ENCODE measurements at regions of chr18 and their contacts with region 1.

Region 1: DNA sequence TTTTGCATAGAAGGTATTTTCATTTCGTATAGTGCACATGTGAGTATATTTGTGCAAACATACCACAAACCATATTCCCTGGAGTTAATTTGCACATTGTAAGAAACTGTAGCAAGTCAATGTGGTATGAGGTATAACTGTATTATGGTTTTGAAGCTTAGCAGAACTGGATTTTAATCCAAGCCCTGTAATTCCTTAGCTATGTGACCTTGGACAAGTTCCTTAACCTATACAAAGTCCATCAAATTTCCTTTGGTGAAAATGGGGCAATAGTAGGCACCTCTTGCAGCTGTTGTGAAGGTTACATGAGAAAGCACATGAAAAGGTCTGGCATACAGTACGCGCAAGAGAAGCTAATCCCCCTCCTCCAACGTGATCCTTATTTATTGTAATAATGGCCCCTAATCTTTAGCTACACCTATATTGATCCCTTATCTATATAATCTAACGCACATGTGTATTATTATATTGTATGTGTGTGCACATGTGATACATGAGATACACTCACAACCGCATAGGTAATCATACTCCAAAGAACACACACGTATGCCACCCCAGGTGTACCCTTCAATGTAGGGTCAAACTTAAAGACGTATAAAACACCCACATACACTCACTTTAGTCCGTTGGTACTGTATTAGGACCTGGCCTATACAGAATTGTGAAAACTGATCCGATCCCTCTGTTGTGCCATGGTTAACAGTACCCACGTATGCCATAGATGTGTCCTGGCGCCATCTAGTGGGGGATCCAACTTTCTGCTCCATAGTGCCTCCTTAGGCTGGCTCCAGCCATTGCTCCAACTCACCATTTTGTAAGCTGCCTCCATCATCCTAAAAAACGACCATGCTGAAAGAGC is 402.9 kb upstream of the SLC14A2 start:
- DNase-seq: peak; percentile 58
- ATAC-seq: peak; percentile 100
- H3K4me3 ChIP-seq: no peak overlapping the region
- H3K27ac ChIP-seq: no peak overlapping the region
- H3K4me1 ChIP-seq: no peaks in the 10 kb centered on the region
- H3K27me3 ChIP-seq: no peaks in the 10 kb centered on the region
- CTCF ChIP-seq: peak; percentile 99 to 100 (median 99); a peak in 5 of 6 replicates
- EP300 ChIP-seq: no peak
- POLR2A ChIP-seq: no peak
- RAD21 ChIP-seq: peak; percentile 96

Region 2: GRCh38 chr18:44725300-44726096 is 486.9 kb before region 1 on chr18:
- CTCF ChIA-PET with region 1: interaction called, 10 read pairs
- POLR2A ChIA-PET with region 1: no interaction called
- RAD21 ChIA-PET with region 1: interaction called, 3 read pairs
- SMC1A ChIA-PET with region 1: interaction called, 12 read pairs
- in situ Hi-C with region 1: no loop called
- intact Hi-C with region 1: no loop called
- DNase-seq: peak; percentile 71
- ATAC-seq: peak; percentile 73
- H3K4me3 ChIP-seq: peak overlapping the region; percentile 33; the same call in 1 of the 2 replicates
- H3K27ac ChIP-seq: peak overlapping the region; percentile 35
- H3K4me1 ChIP-seq: peaks cover 73% of the 10 kb centered on the region
- H3K27me3 ChIP-seq: no peaks in the 10 kb centered on the region
- CTCF ChIP-seq: no peak
- EP300 ChIP-seq: peak; percentile 50 to 89; a peak in 3 of 4 replicates
- POLR2A ChIP-seq: no peak
- RAD21 ChIP-seq: peak; percentile 30; the same call in 1 of the 2 replicates

Region 3: GRCh38 chr18:44901283-44901682 is 311.1 kb before region 1 on chr18:
- CTCF ChIA-PET with region 1: interaction called, 49 read pairs
- POLR2A ChIA-PET with region 1: no interaction called
- RAD21 ChIA-PET with region 1: interaction called, 31 read pairs
- SMC1A ChIA-PET with region 1: interaction called, 10 read pairs
- in situ Hi-C with region 1: loop called (anchors 5 kb)
- intact Hi-C with region 1: loop called (anchors 1 kb)
- DNase-seq: no peak
- ATAC-seq: peak; percentile 52; the same call in 2 of the 3 replicates
- H3K4me3 ChIP-seq: no peak overlapping the region
- H3K27ac ChIP-seq: no peak overlapping the region
- H3K4me1 ChIP-seq: no peaks in the 10 kb centered on the region
- H3K27me3 ChIP-seq: no peaks in the 10 kb centered on the region
- CTCF ChIP-seq: 0 out of 6 replicates have a peak, but pooled peaks of 1 of the 3 experiments have one; percentile 26
- EP300 ChIP-seq: no peak
- POLR2A ChIP-seq: no peak
- RAD21 ChIP-seq: peak; percentile 32; the same call in 1 of the 2 replicates

Region 4: DNA sequence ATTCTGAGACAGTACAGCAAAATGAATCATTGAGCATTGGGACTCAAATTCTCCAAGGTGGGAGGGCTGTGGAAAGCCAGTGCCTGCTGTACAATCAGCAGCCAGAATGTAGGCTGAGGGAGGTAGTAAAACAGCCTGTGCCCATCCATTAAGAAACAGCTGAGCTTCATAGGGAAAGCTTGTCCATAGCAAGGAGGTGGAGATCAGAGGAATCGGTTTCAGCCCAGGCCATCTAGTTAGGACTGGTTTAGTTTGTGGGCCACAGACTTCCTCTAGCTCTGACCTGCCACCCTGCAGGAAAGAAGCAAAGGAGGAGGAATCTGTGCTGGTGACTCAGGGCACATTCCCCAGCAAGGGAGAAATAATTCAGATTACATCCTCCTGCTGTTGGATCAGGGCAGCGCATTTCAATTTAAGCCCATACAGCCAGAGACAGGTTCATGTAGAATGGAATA is 198.3 kb before region 1 on chr18:
- CTCF ChIA-PET with region 1: no interaction called
- POLR2A ChIA-PET with region 1: no interaction called
- RAD21 ChIA-PET with region 1: no interaction called
- SMC1A ChIA-PET with region 1: no interaction called
- in situ Hi-C with region 1: loop called (anchors 25 kb)
- intact Hi-C with region 1: no loop called
- DNase-seq: no peak
- ATAC-seq: no peak
- H3K4me3 ChIP-seq: no peak overlapping the region
- H3K27ac ChIP-seq: no peak overlapping the region
- H3K4me1 ChIP-seq: peaks cover 6% of the 10 kb centered on the region
- H3K27me3 ChIP-seq: no peaks in the 10 kb centered on the region
- CTCF ChIP-seq: no peak
- EP300 ChIP-seq: no peak
- POLR2A ChIP-seq: no peak
- RAD21 ChIP-seq: no peak

Region 5: GRCh38 chr18:45106331-45106774 is 106.1 kb before region 1 on chr18:
- CTCF ChIA-PET with region 1: interaction called, 25 read pairs
- POLR2A ChIA-PET with region 1: no interaction called
- RAD21 ChIA-PET with region 1: interaction called, 11 read pairs
- SMC1A ChIA-PET with region 1: interaction called, 23 read pairs
- in situ Hi-C with region 1: no loop called
- intact Hi-C with region 1: loop called (anchors 5 kb)
- DNase-seq: peak; percentile 87
- ATAC-seq: peak; percentile 83
- H3K4me3 ChIP-seq: no peak overlapping the region
- H3K27ac ChIP-seq: peak overlapping the region; percentile 92
- H3K4me1 ChIP-seq: peaks cover 47% of the 10 kb centered on the region
- H3K27me3 ChIP-seq: no peaks in the 10 kb centered on the region
- CTCF ChIP-seq: no peak
- EP300 ChIP-seq: peak; percentile 97 to 99
- POLR2A ChIP-seq: no peak
- RAD21 ChIP-seq: no peak

Region 6: GRCh38 chr18:45255197-45255890 is 42.9 kb after region 1 on chr18:
- CTCF ChIA-PET with region 1: no interaction called
- POLR2A ChIA-PET with region 1: no interaction called
- RAD21 ChIA-PET with region 1: no interaction called
- SMC1A ChIA-PET with region 1: no interaction called
- in situ Hi-C with region 1: no loop called
- intact Hi-C with region 1: no loop called
- DNase-seq: no peak
- ATAC-seq: no peak
- H3K4me3 ChIP-seq: no peak overlapping the region
- H3K27ac ChIP-seq: no peak overlapping the region
- H3K4me1 ChIP-seq: no peaks in the 10 kb centered on the region
- H3K27me3 ChIP-seq: no peaks in the 10 kb centered on the region
- CTCF ChIP-seq: no peak
- EP300 ChIP-seq: no peak
- POLR2A ChIP-seq: no peak
- RAD21 ChIP-seq: no peak

Region 7: GRCh38 chr18:45359338-45360001 is 147.1 kb after region 1 on chr18:
- CTCF ChIA-PET with region 1: no interaction called
- POLR2A ChIA-PET with region 1: no interaction called
- RAD21 ChIA-PET with region 1: no interaction called
- SMC1A ChIA-PET with region 1: no interaction called
- in situ Hi-C with region 1: no loop called
- intact Hi-C with region 1: no loop called
- DNase-seq: no peak
- ATAC-seq: no peak
- H3K4me3 ChIP-seq: no peak overlapping the region
- H3K27ac ChIP-seq: no peak overlapping the region
- H3K4me1 ChIP-seq: no peaks in the 10 kb centered on the region
- H3K27me3 ChIP-seq: no peaks in the 10 kb centered on the region; a peak in 2 of 4 replicates
- CTCF ChIP-seq: no peak
- EP300 ChIP-seq: no peak
- POLR2A ChIP-seq: no peak
- RAD21 ChIP-seq: no peak

Measured in GM12878 (cell line).